CD4-positive, alpha-beta memory T cell (primary cell): ENCODE measurements at regions of chr13 and their contacts with region 1.

Region 1: DNA sequence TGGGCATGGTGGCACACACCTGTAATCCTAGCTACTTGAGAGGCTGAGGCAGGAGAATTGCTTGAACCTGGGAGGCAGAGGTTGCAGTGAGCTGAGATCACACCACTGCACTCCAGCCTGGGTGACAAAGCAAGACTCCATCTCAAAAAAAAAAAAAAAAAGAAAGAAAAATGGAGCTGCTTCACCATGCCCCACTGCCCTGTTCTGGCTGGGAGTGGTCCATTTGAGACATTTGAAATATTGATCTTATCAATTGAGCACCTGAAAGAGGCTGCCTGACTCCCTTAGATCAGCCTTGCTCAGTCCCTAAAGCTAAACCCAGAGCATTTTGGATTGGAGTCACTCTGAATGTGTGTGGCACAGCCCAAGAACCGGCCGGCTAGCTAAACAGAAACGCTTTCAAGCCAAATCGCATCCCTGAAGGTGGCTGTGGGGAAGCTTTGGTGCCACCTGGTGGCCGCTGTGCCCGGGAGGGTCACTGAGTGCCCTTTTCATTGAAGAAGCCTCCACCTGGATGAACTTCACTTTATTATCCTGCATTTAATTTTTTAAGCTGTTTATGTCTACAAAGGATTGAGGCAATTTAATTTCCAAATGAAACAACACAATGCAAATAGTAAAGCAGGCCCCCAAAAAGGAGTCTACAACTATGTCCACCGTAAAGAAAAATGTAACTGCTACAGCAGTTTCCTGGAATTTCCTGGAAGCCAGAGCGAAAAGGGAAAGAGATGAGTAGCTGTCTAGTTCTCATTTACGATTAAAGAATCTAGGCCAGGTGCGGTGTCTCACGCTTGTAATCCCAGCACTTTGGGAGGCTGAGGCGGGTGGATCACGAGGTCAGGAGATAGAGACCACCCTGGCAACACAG is 53.1 kb upstream of the SERPINE3 start:
- DNase-seq: peak; percentile 35 to 50 (median 44)
- H3K4me3 ChIP-seq: no peak overlapping the region
- H3K4me3 Mint-ChIP-seq: peak overlapping the region in 3 of 8 donors; percentile 7 to 39 (median 17)
- H3K27ac ChIP-seq: no peak overlapping the region
- H3K27ac Mint-ChIP-seq: no peak overlapping the region
- H3K4me1 ChIP-seq: no peaks in the 10 kb centered on the region
- H3K4me1 Mint-ChIP-seq: peaks cover 0 to 1% (median 0%) of the 10 kb centered on the region in 4 donors
- H3K27me3 ChIP-seq: no peaks in the 10 kb centered on the region
- H3K27me3 Mint-ChIP-seq: peaks cover 7 to 9% of the 10 kb centered on the region in 2 donors

Region 2: GRCh38 chr13:49976314-49977258 is 1309.8 kb before region 1 on chr13:
- CTCF ChIA-PET with region 1: interaction called, 13 read pairs
- POLR2A ChIA-PET with region 1: no interaction called
- intact Hi-C with region 1: loop called (anchors 2 kb)
- DNase-seq: peak; percentile 68 to 75 (median 71)
- H3K4me3 ChIP-seq: no peak overlapping the region
- H3K4me3 Mint-ChIP-seq: no peak overlapping the region
- H3K27ac ChIP-seq: no peak overlapping the region
- H3K27ac Mint-ChIP-seq: no peak overlapping the region
- H3K4me1 ChIP-seq: no peaks in the 10 kb centered on the region
- H3K4me1 Mint-ChIP-seq: peaks cover 0 to 5% (median 3%) of the 10 kb centered on the region in 4 donors
- H3K27me3 ChIP-seq: no peaks in the 10 kb centered on the region
- H3K27me3 Mint-ChIP-seq: no peaks in the 10 kb centered on the region

Region 3: GRCh38 chr13:51262501-51263211 is 23.7 kb before region 1 on chr13:
- CTCF ChIA-PET with region 1: interaction called, 47 read pairs
- POLR2A ChIA-PET with region 1: no interaction called
- intact Hi-C with region 1: no loop called
- DNase-seq: no peak
- H3K4me3 ChIP-seq: no peak overlapping the region
- H3K4me3 Mint-ChIP-seq: no peak overlapping the region
- H3K27ac ChIP-seq: no peak overlapping the region
- H3K27ac Mint-ChIP-seq: no peak overlapping the region
- H3K4me1 ChIP-seq: no peaks in the 10 kb centered on the region
- H3K4me1 Mint-ChIP-seq: no peaks in the 10 kb centered on the region
- H3K27me3 ChIP-seq: no peaks in the 10 kb centered on the region
- H3K27me3 Mint-ChIP-seq: peaks cover 2 to 10% of the 10 kb centered on the region in 2 donors

Region 4: DNA sequence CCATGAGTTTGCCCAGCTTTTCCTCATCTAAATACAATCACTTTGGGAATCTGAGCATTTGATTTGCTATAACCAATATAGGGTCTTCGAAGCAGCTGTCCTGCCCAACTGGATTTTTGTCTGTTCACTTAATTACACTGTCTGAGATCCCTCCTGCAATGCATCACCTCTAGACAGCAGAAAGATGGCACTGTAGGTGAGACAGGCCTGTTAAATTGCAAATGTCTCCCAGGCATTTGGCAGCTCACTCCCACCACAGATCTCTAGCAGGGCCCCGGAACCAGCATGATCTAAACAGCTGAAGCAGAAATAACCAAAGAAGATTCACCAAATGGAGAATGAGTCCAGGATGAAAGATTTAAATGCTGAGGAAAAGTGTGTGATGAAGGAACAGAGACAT is 11.2 kb after region 1 on chr13:
- CTCF ChIA-PET with region 1: interaction called, 63 read pairs
- POLR2A ChIA-PET with region 1: no interaction called
- intact Hi-C with region 1: no loop called
- DNase-seq: no peak
- H3K4me3 ChIP-seq: no peak overlapping the region
- H3K4me3 Mint-ChIP-seq: no peak overlapping the region
- H3K27ac ChIP-seq: no peak overlapping the region
- H3K27ac Mint-ChIP-seq: no peak overlapping the region
- H3K4me1 ChIP-seq: no peaks in the 10 kb centered on the region
- H3K4me1 Mint-ChIP-seq: no peaks in the 10 kb centered on the region
- H3K27me3 ChIP-seq: no peaks in the 10 kb centered on the region
- H3K27me3 Mint-ChIP-seq: peaks cover 2 to 19% of the 10 kb centered on the region in 2 donors

Region 5: GRCh38 chr13:51308781-51309180 is 22.4 kb after region 1 on chr13:
- CTCF ChIA-PET with region 1: interaction called, 17 read pairs
- POLR2A ChIA-PET with region 1: no interaction called
- intact Hi-C with region 1: no loop called
- DNase-seq: no peak
- H3K4me3 ChIP-seq: no peak overlapping the region
- H3K4me3 Mint-ChIP-seq: no peak overlapping the region
- H3K27ac ChIP-seq: no peak overlapping the region
- H3K27ac Mint-ChIP-seq: no peak overlapping the region
- H3K4me1 ChIP-seq: no peaks in the 10 kb centered on the region
- H3K4me1 Mint-ChIP-seq: no peaks in the 10 kb centered on the region
- H3K27me3 ChIP-seq: no peaks in the 10 kb centered on the region
- H3K27me3 Mint-ChIP-seq: peaks cover 5 to 9% of the 10 kb centered on the region in 2 donors